Esophagus muscularis mucosa (tissue), 4 donors: ENCODE measurements at regions of chr1 and their contacts with region 1.

Region 1: DNA sequence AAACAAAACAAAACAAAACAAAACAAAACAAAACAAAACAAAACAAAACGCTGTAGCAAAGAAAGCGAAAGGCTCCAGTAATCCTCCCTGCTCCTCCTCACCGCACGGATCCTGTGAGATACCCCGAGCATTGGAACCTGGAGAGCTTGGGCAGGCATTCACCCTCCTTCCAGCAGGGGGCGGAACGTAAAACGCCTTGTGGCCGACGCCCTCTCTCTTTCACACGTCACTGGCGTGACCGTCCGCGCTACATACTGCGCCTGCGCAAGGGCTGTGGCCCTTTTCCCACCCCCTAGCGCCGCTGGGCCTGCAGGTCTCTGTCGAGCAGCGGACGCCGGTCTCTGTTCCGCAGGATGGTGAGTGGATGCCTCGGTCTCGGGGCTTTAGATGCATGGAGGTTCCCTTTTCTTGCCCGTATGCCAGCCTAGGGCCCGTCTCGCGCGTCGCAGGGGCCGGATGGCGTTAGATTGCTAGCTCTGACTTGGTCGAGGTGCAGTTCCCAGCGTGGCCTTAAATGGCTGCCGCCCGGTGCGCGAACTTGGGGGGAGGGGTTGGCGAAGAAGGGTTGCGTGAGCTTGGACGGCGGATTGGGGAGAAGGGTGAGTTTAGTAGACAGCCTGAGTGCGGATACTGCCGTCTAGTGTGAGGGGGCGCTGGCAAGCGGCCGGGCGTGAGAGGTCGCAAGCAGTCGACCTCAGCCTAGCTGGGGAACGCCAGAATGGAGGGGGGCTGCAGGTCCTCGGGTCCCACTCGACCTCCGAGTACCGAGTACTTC is at the start of gene RPL5:
- DNase-seq: peak; percentile 99
- H3K4me3 ChIP-seq: peak within 1 kb of the TSS; percentile 84 to 95 (median 92)
- H3K27ac ChIP-seq: peak within 1 kb of the TSS; percentile 95 to 96 (median 95)
- H3K4me1 ChIP-seq: peaks cover 29 to 47% (median 44%) of the 10 kb centered on the region in 4 donors
- H3K27me3 ChIP-seq: no peaks in the 10 kb centered on the region
- CTCF ChIP-seq: peak; percentile 78 to 96 (median 94)
- EP300 ChIP-seq: no peak
- POLR2A ChIP-seq: peak; percentile 91
- total RNA-seq, gene RPL5: 1,085 to 2,182 (median 1,790) TPM

Region 2: DNA sequence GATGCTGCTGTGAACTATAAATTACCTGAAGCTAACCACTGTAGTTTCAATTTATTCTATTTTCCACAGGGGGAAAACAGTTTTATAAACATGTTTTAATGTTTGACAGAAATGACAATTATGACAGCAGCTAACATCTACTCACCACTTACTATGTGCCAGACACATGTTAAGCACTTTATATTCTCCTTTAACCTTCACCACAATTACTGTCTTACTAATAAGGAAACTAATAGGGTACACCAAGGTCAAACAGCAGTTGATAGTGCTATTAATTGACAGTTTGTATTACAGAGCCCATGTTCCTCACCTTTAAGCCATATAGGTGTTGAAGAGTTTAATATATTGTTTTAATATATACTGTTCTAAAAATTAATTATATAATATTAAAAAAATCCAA is 193.5 kb before region 1 on chr1:
- intact Hi-C with region 1: no loop called
- DNase-seq: no peak
- H3K4me3 ChIP-seq: no peak overlapping the region
- H3K27ac ChIP-seq: no peak overlapping the region
- H3K4me1 ChIP-seq: no peaks in the 10 kb centered on the region
- H3K27me3 ChIP-seq: no peaks in the 10 kb centered on the region
- CTCF ChIP-seq: no peak
- EP300 ChIP-seq: no peak
- POLR2A ChIP-seq: no peak

Region 3: GRCh38 chr1:92784639-92785500 is 47.1 kb before region 1 on chr1 and contains the start of gene EVI5:
- intact Hi-C with region 1: loop called (anchors 10 kb)
- DNase-seq: peak; percentile 97
- H3K4me3 ChIP-seq: peak within 1 kb of the TSS; percentile 74 to 99 (median 90)
- H3K27ac ChIP-seq: peak within 1 kb of the TSS; percentile 96 to 99 (median 99)
- H3K4me1 ChIP-seq: peaks cover 19 to 38% (median 31%) of the 10 kb centered on the region in 4 donors
- H3K27me3 ChIP-seq: no peaks in the 10 kb centered on the region
- CTCF ChIP-seq: peak in 2 of 3 experiments; percentile 15 to 16
- EP300 ChIP-seq: no peak
- POLR2A ChIP-seq: peak; percentile 46
- total RNA-seq, gene EVI5: 32.3 to 55.2 (median 40.4) TPM